ENCODE measurements at regions of chr1 and their contacts with region 1.

Region 1: GRCh38 chr1:40143891-40144575 is 17.2 kb upstream of the RLF start:
- DNase-seq: peak in 34 of 35 experiments; percentile 5 to 83 (median 34)
- ATAC-seq: peak; percentile 69 to 90 (median 78)
- H3K4me3 ChIP-seq: no peak overlapping the region
- H3K4me3 Mint-ChIP-seq: no peak overlapping the region
- H3K27ac ChIP-seq: no peak overlapping the region
- H3K27ac Mint-ChIP-seq: no peak overlapping the region
- H3K4me1 ChIP-seq: peaks cover 0 to 4% of the 10 kb centered on the region in 2 experiments
- H3K4me1 Mint-ChIP-seq: peaks cover 6 to 8% (median 7%) of the 10 kb centered on the region in 3 donors
- H3K27me3 ChIP-seq: peaks cover 3% of the 10 kb centered on the region in 2 experiments
- H3K27me3 Mint-ChIP-seq: peaks cover 25 to 33% of the 10 kb centered on the region in 2 donors

Region 2: GRCh38 chr1:39575191-39576015 is 568.6 kb before region 1 on chr1:
- CTCF ChIA-PET with region 1: interaction called in 1 of 2 experiments, 10 read pairs
- POLR2A ChIA-PET with region 1: no interaction called
- DNase-seq: peak; percentile 11 to 65 (median 50)
- ATAC-seq: peak; percentile 52 to 67 (median 55)
- H3K4me3 ChIP-seq: peak overlapping the region; percentile 75 to 94
- H3K4me3 Mint-ChIP-seq: peak overlapping the region; percentile 83 to 89 (median 88)
- H3K27ac ChIP-seq: peak overlapping the region; percentile 56
- H3K27ac Mint-ChIP-seq: peak overlapping the region; percentile 90 to 91
- H3K4me1 ChIP-seq: peaks cover 11 to 34% of the 10 kb centered on the region in 2 experiments
- H3K4me1 Mint-ChIP-seq: peaks cover 27 to 46% (median 45%) of the 10 kb centered on the region in 3 donors
- H3K27me3 ChIP-seq: peaks cover 0 to 3% of the 10 kb centered on the region in 2 experiments
- H3K27me3 Mint-ChIP-seq: no peaks in the 10 kb centered on the region

Region 3: GRCh38 chr1:40344597-40344996 is 200.6 kb after region 1 on chr1:
- CTCF ChIA-PET with region 1: interaction called, 12 to 21 read pairs
- POLR2A ChIA-PET with region 1: no interaction called
- DNase-seq: peak in 26 of 35 experiments; percentile 2 to 44 (median 23)
- ATAC-seq: peak; percentile 70 to 82 (median 76)
- H3K4me3 ChIP-seq: no peak overlapping the region
- H3K4me3 Mint-ChIP-seq: peak overlapping the region; percentile 49 to 67 (median 53)
- H3K27ac ChIP-seq: no peak overlapping the region
- H3K27ac Mint-ChIP-seq: peak overlapping the region; percentile 63 to 73
- H3K4me1 ChIP-seq: peaks cover 0 to 17% of the 10 kb centered on the region in 2 experiments
- H3K4me1 Mint-ChIP-seq: peaks cover 46 to 55% (median 50%) of the 10 kb centered on the region in 3 donors
- H3K27me3 ChIP-seq: no peaks in the 10 kb centered on the region
- H3K27me3 Mint-ChIP-seq: no peaks in the 10 kb centered on the region

Region 4: GRCh38 chr1:40352126-40352525 is 208.1 kb after region 1 on chr1:
- CTCF ChIA-PET with region 1: interaction called in 1 of 2 experiments, 11 read pairs
- POLR2A ChIA-PET with region 1: no interaction called
- DNase-seq: no peak
- ATAC-seq: no peak
- H3K4me3 ChIP-seq: no peak overlapping the region
- H3K4me3 Mint-ChIP-seq: no peak overlapping the region
- H3K27ac ChIP-seq: no peak overlapping the region
- H3K27ac Mint-ChIP-seq: no peak overlapping the region
- H3K4me1 ChIP-seq: no peaks in the 10 kb centered on the region
- H3K4me1 Mint-ChIP-seq: peaks cover 0 to 1% (median 0%) of the 10 kb centered on the region in 3 donors
- H3K27me3 ChIP-seq: no peaks in the 10 kb centered on the region
- H3K27me3 Mint-ChIP-seq: no peaks in the 10 kb centered on the region

Region 5: DNA sequence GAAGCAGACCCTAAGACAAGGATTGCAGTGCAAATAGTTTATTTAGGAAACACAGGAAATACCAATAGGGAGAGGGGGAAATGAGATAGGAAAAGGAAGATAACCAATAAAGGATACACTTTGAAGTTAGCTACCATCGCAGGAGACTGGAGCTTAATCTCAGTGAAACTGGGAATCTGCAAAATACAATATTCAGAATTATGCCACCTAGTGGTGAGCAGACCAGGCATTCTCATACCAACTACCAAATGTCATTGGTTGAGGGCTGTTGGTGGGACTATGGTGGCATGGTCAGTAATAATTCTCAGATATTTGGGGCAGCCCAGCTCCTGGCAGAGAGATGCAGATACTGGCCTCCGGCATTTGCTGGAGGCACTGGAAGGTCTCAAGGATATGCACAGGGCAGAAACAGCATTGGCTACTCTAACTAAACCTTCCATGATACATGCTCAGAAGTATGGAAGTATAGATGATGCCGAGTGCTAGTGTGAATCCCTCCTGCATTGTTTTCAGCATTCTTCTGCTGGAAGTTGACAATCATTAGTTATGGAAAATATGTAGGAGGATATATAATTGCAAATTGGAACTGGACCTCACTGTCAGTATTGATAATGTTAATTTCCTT is 294.5 kb after region 1 on chr1:
- CTCF ChIA-PET with region 1: interaction called, 3 to 20 read pairs
- POLR2A ChIA-PET with region 1: no interaction called
- DNase-seq: peak in 9 of 35 experiments; percentile 10 to 62 (median 14)
- ATAC-seq: peak; percentile 32 to 55 (median 46)
- H3K4me3 ChIP-seq: no peak overlapping the region
- H3K4me3 Mint-ChIP-seq: no peak overlapping the region
- H3K27ac ChIP-seq: no peak overlapping the region
- H3K27ac Mint-ChIP-seq: no peak overlapping the region
- H3K4me1 ChIP-seq: no peaks in the 10 kb centered on the region
- H3K4me1 Mint-ChIP-seq: peaks cover 3 to 10% (median 5%) of the 10 kb centered on the region in 3 donors
- H3K27me3 ChIP-seq: no peaks in the 10 kb centered on the region
- H3K27me3 Mint-ChIP-seq: no peaks in the 10 kb centered on the region

Measured in T-cell (primary cell).